ENCODE measurements at regions of chr3 and their contacts with region 1.

Region 1: GRCh38 chr3:52291508-52292181 is 4.0 kb downstream of the GLYCTK start:
- DNase-seq: peak; percentile 49 to 65
- H3K4me3 ChIP-seq: peak overlapping the region; percentile 89
- H3K4me3 Mint-ChIP-seq: peak overlapping the region; percentile 80
- H3K27ac Mint-ChIP-seq: peak overlapping the region; percentile 63
- H3K4me1 ChIP-seq: peaks cover 22% of the 10 kb centered on the region
- H3K4me1 Mint-ChIP-seq: peaks cover 32% of the 10 kb centered on the region
- H3K27me3 ChIP-seq: no peaks in the 10 kb centered on the region
- H3K27me3 Mint-ChIP-seq: no peaks in the 10 kb centered on the region
- CTCF ChIP-seq: peak; percentile 58 to 64

Region 2: GRCh38 chr3:52238761-52239701 is 52.6 kb before region 1 on chr3 and contains the start of gene TWF2:
- CTCF ChIA-PET with region 1: interaction called, 3 read pairs
- POLR2A ChIA-PET with region 1: interaction called, 3 read pairs
- intact Hi-C with region 1: loop called (anchors 2 kb)
- DNase-seq: peak; percentile 68 to 88
- H3K4me3 ChIP-seq: peak within 1 kb of the TSS; percentile 100
- H3K4me3 Mint-ChIP-seq: peak within 1 kb of the TSS; percentile 83
- H3K27ac Mint-ChIP-seq: peak within 1 kb of the TSS; percentile 91
- H3K4me1 ChIP-seq: peaks cover 18% of the 10 kb centered on the region; the same call in 1 of the 2 replicates
- H3K4me1 Mint-ChIP-seq: peaks cover 8% of the 10 kb centered on the region
- H3K27me3 ChIP-seq: no peaks in the 10 kb centered on the region
- H3K27me3 Mint-ChIP-seq: no peaks in the 10 kb centered on the region
- CTCF ChIP-seq: peak in 1 of 2 experiments; percentile 53
- total RNA-seq, gene TWF2: 29.9 and 30.5 TPM in 2 replicates

Region 3: DNA sequence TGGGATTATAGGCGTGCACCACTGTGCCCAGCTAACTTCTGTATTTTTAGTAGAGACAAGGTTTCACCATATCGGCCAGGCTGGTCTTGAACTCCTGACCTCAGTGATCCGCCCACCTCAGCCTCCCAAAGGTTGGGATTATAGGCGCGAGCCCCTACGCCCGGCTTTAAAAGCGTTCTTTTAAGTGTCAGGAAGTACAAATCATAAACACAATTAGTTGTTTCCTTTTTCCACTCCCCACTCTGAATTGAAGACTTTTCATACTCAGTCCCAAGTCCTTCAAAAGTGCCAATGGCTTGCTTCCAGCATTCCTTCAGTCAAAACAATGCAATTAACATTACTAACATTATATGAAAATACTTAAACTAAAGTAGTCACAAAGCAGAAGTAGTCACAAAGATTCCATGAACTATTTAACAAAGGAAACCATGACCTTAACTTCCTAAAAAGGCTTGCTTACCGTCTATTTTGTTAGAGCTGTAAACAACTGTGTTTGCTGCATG is 21.3 kb before region 1 on chr3:
- CTCF ChIA-PET with region 1: interaction called, 3 read pairs
- POLR2A ChIA-PET with region 1: no interaction called
- intact Hi-C with region 1: loop called (anchors 1 kb)
- DNase-seq: no peak
- H3K4me3 ChIP-seq: no peak overlapping the region
- H3K4me3 Mint-ChIP-seq: no peak overlapping the region
- H3K27ac Mint-ChIP-seq: no peak overlapping the region
- H3K4me1 ChIP-seq: peaks cover 13% of the 10 kb centered on the region; the same call in 1 of the 2 replicates
- H3K4me1 Mint-ChIP-seq: peaks cover 6% of the 10 kb centered on the region
- H3K27me3 ChIP-seq: no peaks in the 10 kb centered on the region
- H3K27me3 Mint-ChIP-seq: no peaks in the 10 kb centered on the region
- CTCF ChIP-seq: no peak

Region 4: DNA sequence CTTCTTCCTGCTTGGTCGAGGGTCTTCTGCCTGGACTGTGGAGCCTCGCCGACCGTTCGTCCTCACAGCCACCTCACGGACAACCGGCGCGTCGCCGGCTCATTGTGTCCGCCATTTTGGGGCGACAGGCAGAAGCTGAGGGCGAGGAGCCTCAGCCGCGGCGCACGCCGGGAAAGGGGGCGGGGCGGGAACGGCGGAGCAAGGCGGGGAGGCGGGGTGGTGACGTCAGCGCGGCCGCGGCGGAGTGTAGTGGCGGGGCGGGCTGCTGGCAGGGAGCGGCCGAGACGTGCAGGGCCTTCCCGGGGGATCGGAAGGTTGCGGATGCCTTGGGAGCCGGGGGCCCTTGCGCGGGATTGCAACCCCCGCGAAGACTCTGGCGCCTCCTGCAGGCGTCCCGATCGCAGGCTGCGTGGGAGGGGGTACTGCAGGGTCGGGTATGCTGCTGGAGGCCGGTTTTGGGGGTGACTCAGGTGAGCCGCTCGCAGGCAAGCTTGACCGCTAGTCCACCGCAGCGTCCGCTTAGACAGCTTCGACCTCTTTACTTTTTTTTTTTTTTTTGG is 13.1 kb before region 1 on chr3 and contains the start of gene WDR82:
- CTCF ChIA-PET with region 1: interaction called, 16 read pairs
- POLR2A ChIA-PET with region 1: interaction called, 18 read pairs
- intact Hi-C with region 1: loop called (anchors 1 kb)
- DNase-seq: peak; percentile 95 to 98
- H3K4me3 ChIP-seq: peak within 1 kb of the TSS; percentile 77
- H3K4me3 Mint-ChIP-seq: peak within 1 kb of the TSS; percentile 100
- H3K27ac Mint-ChIP-seq: peak within 1 kb of the TSS; percentile 100
- H3K4me1 ChIP-seq: peaks cover 45% of the 10 kb centered on the region
- H3K4me1 Mint-ChIP-seq: peaks cover 14% of the 10 kb centered on the region
- H3K27me3 ChIP-seq: no peaks in the 10 kb centered on the region
- H3K27me3 Mint-ChIP-seq: no peaks in the 10 kb centered on the region
- CTCF ChIP-seq: peak; percentile 53 to 72
- total RNA-seq, gene WDR82: 67.1 and 68.7 TPM in 2 replicates

Measured in Caco-2 (cell line).